ENCODE measurements at regions of chr6 and their contacts with region 1.

Region 1: DNA sequence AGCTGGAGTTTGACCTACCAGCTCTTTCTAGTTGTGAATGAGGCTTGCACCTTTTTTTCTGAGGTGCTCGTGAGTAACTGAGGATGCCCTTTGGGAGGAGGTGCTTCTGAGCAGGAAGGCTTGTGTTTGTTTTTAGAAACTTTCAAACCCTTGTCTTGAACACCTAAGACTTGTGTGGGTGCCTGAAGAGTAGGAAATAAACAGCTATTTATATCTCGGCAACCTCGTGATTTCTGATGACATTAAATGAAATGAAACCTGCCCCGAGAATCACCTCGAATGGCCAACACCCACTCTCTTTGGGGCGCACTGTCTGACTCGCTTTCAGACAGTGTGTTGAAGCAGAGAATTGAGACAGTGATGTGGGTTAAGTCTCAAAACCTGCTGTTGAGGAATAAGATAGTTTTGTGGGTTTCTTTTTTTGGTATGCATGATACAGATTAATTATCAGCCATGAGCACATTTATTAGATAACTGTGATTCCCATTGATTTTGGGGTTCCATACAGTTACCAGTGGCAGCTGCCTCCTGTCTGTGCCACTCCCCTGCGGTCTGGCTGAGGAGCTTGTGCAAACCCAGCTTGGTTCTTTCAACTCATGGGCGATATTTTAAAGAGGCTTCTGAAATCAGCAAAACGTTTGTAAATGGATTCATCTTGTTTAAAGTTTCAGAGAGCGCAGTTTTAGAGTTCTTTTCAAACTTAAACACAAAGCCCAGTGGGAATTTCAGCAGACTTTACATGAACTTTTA is 8.4 kb downstream of the IRF4 start:
- DNase-seq: peak; percentile 56
- ATAC-seq: peak; percentile 32
- H3K4me3 Mint-ChIP-seq: peak overlapping the region; percentile 46
- H3K27ac Mint-ChIP-seq: peak overlapping the region; percentile 78
- H3K4me1 Mint-ChIP-seq: peaks cover 93% of the 10 kb centered on the region
- H3K27me3 Mint-ChIP-seq: no peaks in the 10 kb centered on the region

Region 2: GRCh38 chr6:188821-189655 is 210.9 kb before region 1 on chr6:
- CTCF ChIA-PET with region 1: interaction called, 85 read pairs
- POLR2A ChIA-PET with region 1: interaction called, 87 read pairs
- DNase-seq: peak; percentile 91
- ATAC-seq: peak; percentile 90
- H3K4me3 Mint-ChIP-seq: no peak overlapping the region
- H3K27ac Mint-ChIP-seq: peak overlapping the region; percentile 68
- H3K4me1 Mint-ChIP-seq: peaks cover 48% of the 10 kb centered on the region
- H3K27me3 Mint-ChIP-seq: no peaks in the 10 kb centered on the region

Region 3: GRCh38 chr6:328136-328670 is 71.8 kb before region 1 on chr6:
- CTCF ChIA-PET with region 1: no interaction called
- POLR2A ChIA-PET with region 1: no interaction called
- DNase-seq: no peak
- ATAC-seq: no peak
- H3K4me3 Mint-ChIP-seq: no peak overlapping the region
- H3K27ac Mint-ChIP-seq: peak overlapping the region; percentile 39
- H3K4me1 Mint-ChIP-seq: no peaks in the 10 kb centered on the region
- H3K27me3 Mint-ChIP-seq: no peaks in the 10 kb centered on the region

Region 4: DNA sequence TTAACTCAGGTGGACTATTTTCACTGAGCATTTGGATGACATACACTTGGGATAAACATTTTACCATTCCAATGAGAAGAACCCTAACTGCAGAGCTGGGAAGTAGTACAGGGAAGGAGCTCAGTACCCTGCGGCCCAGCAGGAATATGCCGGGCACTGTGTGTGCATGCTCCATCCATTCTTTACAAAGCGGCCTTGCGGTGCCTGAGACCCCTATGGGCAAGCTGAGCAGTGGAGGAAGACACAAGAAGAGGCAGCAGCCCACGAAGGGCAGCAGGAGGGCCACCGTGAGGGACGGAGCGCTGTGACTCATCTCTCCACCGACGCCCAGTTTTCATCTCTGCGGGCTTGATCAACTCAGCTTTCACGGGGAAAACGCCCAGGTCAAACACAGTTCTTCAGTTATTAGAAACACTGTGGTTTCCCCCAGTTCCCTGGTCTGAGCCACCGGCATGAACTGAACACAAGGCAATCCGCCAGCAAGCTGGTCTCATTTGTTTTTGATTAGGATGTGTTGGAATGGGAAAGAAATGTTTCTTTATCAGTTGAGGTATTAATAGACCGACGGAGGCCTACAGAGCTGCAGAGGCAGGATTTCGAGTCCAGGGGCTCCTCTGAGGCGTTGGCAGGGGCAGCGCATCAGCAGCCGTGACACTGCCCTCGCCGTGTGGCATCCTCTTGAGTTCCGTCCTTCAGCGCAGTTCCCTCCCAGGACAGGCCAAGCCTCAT is 36.5 kb after region 1 on chr6:
- CTCF ChIA-PET with region 1: interaction called, 9 read pairs
- POLR2A ChIA-PET with region 1: interaction called, 10 read pairs
- DNase-seq: no peak
- ATAC-seq: no peak
- H3K4me3 Mint-ChIP-seq: no peak overlapping the region
- H3K27ac Mint-ChIP-seq: peak overlapping the region; percentile 39
- H3K4me1 Mint-ChIP-seq: peaks cover 45% of the 10 kb centered on the region
- H3K27me3 Mint-ChIP-seq: peaks cover 2% of the 10 kb centered on the region

Region 5: DNA sequence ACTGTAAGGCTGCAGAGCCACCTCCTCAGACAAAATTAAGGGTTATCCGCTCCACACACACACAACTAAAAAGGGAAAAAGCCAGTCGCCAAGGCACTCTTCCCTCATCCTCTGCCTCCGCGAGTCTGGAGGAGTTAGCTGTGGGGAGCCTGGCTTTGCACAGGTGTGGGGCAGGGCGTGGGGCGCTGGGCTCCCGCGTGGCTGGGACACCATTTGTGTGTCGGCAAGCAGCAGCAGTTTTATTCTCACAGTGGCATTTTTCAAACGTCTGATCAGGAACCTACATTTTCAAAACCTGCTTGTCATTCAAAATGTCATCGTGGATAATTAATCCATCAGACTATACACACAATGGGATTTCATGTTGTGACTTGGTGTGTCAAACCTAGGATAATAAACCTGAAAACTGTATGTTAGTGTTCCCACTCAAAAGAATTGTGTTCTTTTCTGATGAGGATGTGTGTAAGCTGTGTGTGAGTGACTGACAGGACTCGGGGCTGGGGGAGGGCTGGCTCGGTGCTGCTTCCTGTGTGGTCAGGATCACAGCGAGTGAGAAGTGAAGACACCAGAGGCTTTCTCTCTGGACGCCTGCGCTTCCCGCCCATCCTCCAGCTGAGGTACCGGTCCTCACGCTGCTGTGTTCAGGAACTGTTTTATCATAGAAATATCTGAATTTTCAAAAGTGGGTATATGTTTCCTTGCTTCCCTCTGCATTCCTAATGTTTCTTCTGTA is 74.7 kb after region 1 on chr6:
- CTCF ChIA-PET with region 1: interaction called, 9 read pairs
- POLR2A ChIA-PET with region 1: interaction called, 33 read pairs
- DNase-seq: peak; percentile 93
- ATAC-seq: peak; percentile 100
- H3K4me3 Mint-ChIP-seq: peak overlapping the region; percentile 62
- H3K27ac Mint-ChIP-seq: peak overlapping the region; percentile 96
- H3K4me1 Mint-ChIP-seq: peaks cover 64% of the 10 kb centered on the region
- H3K27me3 Mint-ChIP-seq: no peaks in the 10 kb centered on the region

Region 6: DNA sequence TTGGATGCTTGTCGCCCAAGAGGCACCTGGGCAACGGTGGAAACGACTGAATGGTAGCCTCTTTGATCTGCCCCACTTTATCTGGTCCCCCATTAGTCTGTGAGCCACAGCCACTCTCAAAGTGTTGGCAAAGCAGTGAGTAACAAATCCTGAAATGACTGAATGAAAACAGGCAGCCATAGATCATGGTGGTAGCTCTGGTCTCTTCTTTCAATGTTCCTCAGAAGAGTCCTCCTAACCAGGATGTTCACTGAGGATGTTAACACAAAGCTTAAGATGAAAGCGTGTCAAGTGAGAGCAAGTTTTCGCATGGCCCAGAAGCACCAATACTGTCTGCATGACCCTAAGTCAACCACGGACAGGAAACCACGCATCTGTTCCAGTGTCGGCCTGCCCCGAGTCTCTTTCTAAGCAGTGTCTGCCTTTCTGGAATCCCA is 98.9 kb after region 1 on chr6:
- CTCF ChIA-PET with region 1: interaction called, 3 read pairs
- POLR2A ChIA-PET with region 1: interaction called, 14 read pairs
- DNase-seq: peak; percentile 83
- ATAC-seq: peak; percentile 79
- H3K4me3 Mint-ChIP-seq: peak overlapping the region; percentile 71
- H3K27ac Mint-ChIP-seq: peak overlapping the region; percentile 89
- H3K4me1 Mint-ChIP-seq: peaks cover 75% of the 10 kb centered on the region
- H3K27me3 Mint-ChIP-seq: no peaks in the 10 kb centered on the region

Region 7: GRCh38 chr6:1179571-1180459 is 779.9 kb after region 1 on chr6:
- CTCF ChIA-PET with region 1: no interaction called
- POLR2A ChIA-PET with region 1: no interaction called
- DNase-seq: no peak
- ATAC-seq: no peak
- H3K4me3 Mint-ChIP-seq: no peak overlapping the region
- H3K27ac Mint-ChIP-seq: no peak overlapping the region
- H3K4me1 Mint-ChIP-seq: no peaks in the 10 kb centered on the region
- H3K27me3 Mint-ChIP-seq: peaks cover 4% of the 10 kb centered on the region

Measured in activated CD8-positive, alpha-beta T cell treated with anti-CD3 and anti-CD28 coated beads, Interleukin-2, amount 10 ng/mL, durations not matched to agents 7 days and 5 days (primary cell).